Tibial artery (tissue), 4 donors: ENCODE measurements at regions of chr19 and their contacts with region 1.

Region 1: DNA sequence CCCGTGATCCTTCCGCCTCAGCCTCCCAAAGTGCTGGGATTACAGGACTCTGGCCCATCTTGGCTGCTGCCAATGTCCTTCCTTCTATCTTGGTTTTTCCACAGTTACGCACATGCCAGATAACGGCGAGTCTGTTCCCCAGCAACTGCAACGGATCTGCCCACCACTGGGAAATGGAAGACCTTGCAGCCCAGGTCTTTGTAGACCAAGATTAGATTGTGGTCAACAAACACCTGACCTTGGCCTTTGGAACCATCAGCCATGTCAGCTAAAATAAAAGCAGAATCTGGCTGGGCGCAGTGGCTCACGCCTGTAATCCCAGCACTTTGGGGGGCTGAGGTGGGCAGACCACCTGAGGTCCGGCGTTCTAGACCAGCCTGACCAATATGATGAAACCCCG is 10.4 kb upstream of the LDLR start:
- DNase-seq: no peak
- H3K4me3 ChIP-seq: no peak overlapping the region
- H3K27ac ChIP-seq: no peak overlapping the region
- H3K4me1 ChIP-seq: peaks cover 0 to 15% (median 4%) of the 10 kb centered on the region in 4 donors
- H3K27me3 ChIP-seq: no peaks in the 10 kb centered on the region
- CTCF ChIP-seq: no peak

Region 2: GRCh38 chr19:11041966-11042627 is 36.8 kb before region 1 on chr19:
- intact Hi-C with region 1: loop called (anchors 5 kb)
- DNase-seq: no peak
- H3K4me3 ChIP-seq: no peak overlapping the region
- H3K27ac ChIP-seq: no peak overlapping the region
- H3K4me1 ChIP-seq: no peaks in the 10 kb centered on the region
- H3K27me3 ChIP-seq: no peaks in the 10 kb centered on the region
- CTCF ChIP-seq: no peak